ENCODE measurements at regions of chr2 and their contacts with region 1.

Region 1: GRCh38 chr2:217943446-217944389 is 59.1 kb downstream of the TNS1 start:
- DNase-seq: no peak
- ATAC-seq: peak; percentile 79
- H3K4me3 ChIP-seq: no peak overlapping the region; a peak in 1 of 4 replicates
- H3K27ac ChIP-seq: no peak overlapping the region
- H3K4me1 ChIP-seq: no peaks in the 10 kb centered on the region
- H3K27me3 ChIP-seq: peaks cover 3% of the 10 kb centered on the region; the same call in 1 of the 2 replicates
- CTCF ChIP-seq: no peak

Region 2: GRCh38 chr2:217880287-217880889 is 63.3 kb before region 1 on chr2:
- CTCF ChIA-PET with region 1: no interaction called
- POLR2A ChIA-PET with region 1: no interaction called
- in situ Hi-C with region 1: no loop called
- intact Hi-C with region 1: no loop called
- DNase-seq: no peak
- ATAC-seq: no peak
- H3K4me3 ChIP-seq: no peak overlapping the region
- H3K27ac ChIP-seq: no peak overlapping the region
- H3K4me1 ChIP-seq: no peaks in the 10 kb centered on the region
- H3K27me3 ChIP-seq: no peaks in the 10 kb centered on the region
- CTCF ChIP-seq: 0 out of 2 replicates have a peak, but pooled peaks have one; percentile 14

Region 3: GRCh38 chr2:217964275-217965161 is 20.8 kb after region 1 on chr2:
- CTCF ChIA-PET with region 1: no interaction called
- POLR2A ChIA-PET with region 1: no interaction called
- in situ Hi-C with region 1: no loop called
- intact Hi-C with region 1: loop called (anchors 1 kb)
- DNase-seq: no peak
- ATAC-seq: no peak; the same call in 1 of the 2 replicates
- H3K4me3 ChIP-seq: no peak overlapping the region
- H3K27ac ChIP-seq: no peak overlapping the region
- H3K4me1 ChIP-seq: no peaks in the 10 kb centered on the region
- H3K27me3 ChIP-seq: peaks cover 12% of the 10 kb centered on the region
- CTCF ChIP-seq: no peak